CD8-positive, alpha-beta T cell (primary cell): ENCODE measurements at regions of chr5 and their contacts with region 1.

Region 1: GRCh38 chr5:176573564-176574296 is 24.6 kb downstream of the CDHR2 start:
- DNase-seq: peak; percentile 53 to 91 (median 77)
- ATAC-seq: peak; percentile 86
- H3K4me3 ChIP-seq: no peak overlapping the region
- H3K4me3 Mint-ChIP-seq: no peak overlapping the region
- H3K27ac ChIP-seq: no peak overlapping the region
- H3K27ac Mint-ChIP-seq: no peak overlapping the region
- H3K4me1 ChIP-seq: peaks cover 4% of the 10 kb centered on the region
- H3K4me1 Mint-ChIP-seq: peaks cover 4% of the 10 kb centered on the region
- H3K27me3 ChIP-seq: peaks cover 0 to 4% of the 10 kb centered on the region in 2 experiments
- H3K27me3 Mint-ChIP-seq: peaks cover 4% of the 10 kb centered on the region
- CTCF ChIP-seq: peak; percentile 72

Region 2: GRCh38 chr5:176485176-176485575 is 88.6 kb before region 1 on chr5:
- CTCF ChIA-PET with region 1: interaction called, 10 read pairs
- POLR2A ChIA-PET with region 1: no interaction called
- intact Hi-C with region 1: no loop called
- DNase-seq: no peak
- ATAC-seq: no peak
- H3K4me3 ChIP-seq: no peak overlapping the region
- H3K4me3 Mint-ChIP-seq: no peak overlapping the region
- H3K27ac ChIP-seq: no peak overlapping the region
- H3K27ac Mint-ChIP-seq: no peak overlapping the region
- H3K4me1 ChIP-seq: peaks cover 7% of the 10 kb centered on the region
- H3K4me1 Mint-ChIP-seq: peaks cover 40% of the 10 kb centered on the region
- H3K27me3 ChIP-seq: no peaks in the 10 kb centered on the region
- H3K27me3 Mint-ChIP-seq: no peaks in the 10 kb centered on the region
- CTCF ChIP-seq: no peak

Region 3: GRCh38 chr5:176543428-176544173 is 30.1 kb before region 1 on chr5:
- CTCF ChIA-PET with region 1: interaction called, 4 read pairs
- POLR2A ChIA-PET with region 1: interaction called, 5 read pairs
- intact Hi-C with region 1: loop called in 1 of 2 experiments (anchors 1 kb)
- DNase-seq: peak; percentile 52 to 89 (median 72)
- ATAC-seq: peak; percentile 57
- H3K4me3 ChIP-seq: peak overlapping the region; percentile 70 to 91
- H3K4me3 Mint-ChIP-seq: peak overlapping the region; percentile 91
- H3K27ac ChIP-seq: peak overlapping the region; percentile 87 to 89
- H3K27ac Mint-ChIP-seq: peak overlapping the region; percentile 96
- H3K4me1 ChIP-seq: peaks cover 68% of the 10 kb centered on the region
- H3K4me1 Mint-ChIP-seq: peaks cover 74% of the 10 kb centered on the region
- H3K27me3 ChIP-seq: no peaks in the 10 kb centered on the region
- H3K27me3 Mint-ChIP-seq: no peaks in the 10 kb centered on the region
- CTCF ChIP-seq: no peak

Region 4: DNA sequence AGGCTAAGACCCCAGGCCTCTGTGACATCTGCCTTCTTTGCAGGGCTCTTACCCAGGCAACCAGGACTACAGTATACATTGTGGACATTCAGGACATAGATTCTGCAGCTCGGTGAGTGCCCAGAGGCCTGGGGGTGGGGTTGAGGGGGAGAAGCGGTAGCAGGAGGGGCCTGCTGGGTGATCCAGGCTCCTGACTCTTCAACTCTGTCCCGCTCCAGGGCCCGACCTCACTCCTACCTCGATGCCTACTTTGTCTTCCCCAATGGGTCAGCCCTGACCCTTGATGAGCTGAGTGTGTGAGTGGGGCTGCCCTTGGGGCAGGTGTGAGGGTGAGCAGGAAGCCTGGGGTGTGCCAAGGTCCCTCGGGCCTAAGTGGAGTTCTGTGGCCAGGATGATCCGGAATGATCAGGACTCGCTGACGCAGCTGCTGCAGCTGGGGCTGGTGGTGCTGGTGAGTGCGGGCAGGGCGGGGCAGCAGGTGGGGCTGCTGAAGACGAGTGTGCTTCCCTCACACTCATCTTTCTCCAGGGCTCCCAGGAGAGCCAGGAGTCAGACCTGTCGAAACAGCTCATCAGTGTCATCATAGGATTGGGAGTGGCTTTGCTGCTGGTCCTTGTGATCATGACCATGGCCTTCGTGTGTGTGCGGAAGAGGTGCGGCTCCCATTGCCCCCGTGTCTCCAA is 16.4 kb after region 1 on chr5:
- CTCF ChIA-PET with region 1: interaction called, 11 read pairs
- POLR2A ChIA-PET with region 1: no interaction called
- intact Hi-C with region 1: no loop called
- DNase-seq: no peak
- ATAC-seq: no peak
- H3K4me3 ChIP-seq: no peak overlapping the region
- H3K4me3 Mint-ChIP-seq: no peak overlapping the region
- H3K27ac ChIP-seq: no peak overlapping the region
- H3K27ac Mint-ChIP-seq: no peak overlapping the region
- H3K4me1 ChIP-seq: no peaks in the 10 kb centered on the region
- H3K4me1 Mint-ChIP-seq: no peaks in the 10 kb centered on the region
- H3K27me3 ChIP-seq: no peaks in the 10 kb centered on the region
- H3K27me3 Mint-ChIP-seq: no peaks in the 10 kb centered on the region
- CTCF ChIP-seq: no peak

Region 5: GRCh38 chr5:176660860-176661641 is 87.3 kb after region 1 on chr5:
- CTCF ChIA-PET with region 1: interaction called, 6 read pairs
- POLR2A ChIA-PET with region 1: no interaction called
- intact Hi-C with region 1: loop called in 1 of 2 experiments (anchors 1 kb)
- DNase-seq: peak; percentile 51 to 88 (median 77)
- ATAC-seq: peak; percentile 75
- H3K4me3 ChIP-seq: no peak overlapping the region
- H3K4me3 Mint-ChIP-seq: peak overlapping the region; percentile 42
- H3K27ac ChIP-seq: no peak overlapping the region
- H3K27ac Mint-ChIP-seq: peak overlapping the region; percentile 70
- H3K4me1 ChIP-seq: peaks cover 27% of the 10 kb centered on the region
- H3K4me1 Mint-ChIP-seq: peaks cover 30% of the 10 kb centered on the region
- H3K27me3 ChIP-seq: no peaks in the 10 kb centered on the region
- H3K27me3 Mint-ChIP-seq: peaks cover 8% of the 10 kb centered on the region
- CTCF ChIP-seq: peak; percentile 98